GM13976 (cell line): ENCODE measurements at regions of chr15 and their contacts with region 1.

Region 1: DNA sequence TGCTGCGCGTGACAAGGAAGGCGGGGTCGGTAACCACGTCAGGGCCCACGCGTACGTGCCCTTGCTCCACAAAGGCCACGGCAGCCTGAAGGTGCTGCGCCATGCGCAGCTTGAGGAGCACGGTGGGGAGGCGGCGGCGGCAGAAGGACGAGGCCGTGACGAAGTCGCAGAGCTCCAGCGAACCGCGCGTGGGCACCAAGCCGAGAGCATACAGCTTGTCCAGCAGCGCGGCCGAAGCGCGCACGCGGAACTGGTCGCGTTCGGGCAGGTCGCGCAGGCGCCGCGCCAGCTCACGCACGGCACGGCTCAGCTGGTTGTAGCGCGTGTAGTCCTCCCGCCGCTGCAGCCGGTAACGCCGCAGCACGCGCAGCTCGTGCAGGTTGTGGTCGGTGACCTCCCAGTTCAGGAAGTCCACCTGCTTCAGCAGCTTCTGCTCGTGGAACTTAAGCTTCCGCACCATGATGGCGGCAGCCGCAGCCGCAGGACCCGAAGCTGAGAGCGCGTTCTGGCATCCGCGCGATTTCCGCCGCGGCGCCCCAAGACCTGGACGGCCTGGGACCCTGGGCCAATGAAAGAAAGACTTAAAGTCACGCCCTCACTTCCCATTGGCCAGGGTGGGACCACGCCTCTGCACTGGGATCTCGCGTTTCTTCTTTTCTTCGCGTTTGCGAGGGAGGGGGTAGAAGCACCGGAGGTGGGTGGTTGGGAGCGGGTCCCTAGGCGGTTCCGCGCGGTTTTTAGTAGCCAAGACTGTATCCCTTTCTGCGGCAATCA is at the start of gene IMP3:
- DNase-seq: peak; percentile 98
- CTCF ChIP-seq: no peak

Region 2: GRCh38 chr15:75367913-75368688 is 271.8 kb before region 1 on chr15 and contains the start of gene MAN2C1:
- in situ Hi-C with region 1: loop called (anchors 25 kb)
- DNase-seq: peak; percentile 97
- CTCF ChIP-seq: peak; percentile 89

Region 3: GRCh38 chr15:76682833-76683232 is 1042.9 kb after region 1 on chr15:
- in situ Hi-C with region 1: no loop called
- DNase-seq: no peak
- CTCF ChIP-seq: no peak